ENCODE measurements at regions of chr1 and their contacts with region 1.

Region 1: DNA sequence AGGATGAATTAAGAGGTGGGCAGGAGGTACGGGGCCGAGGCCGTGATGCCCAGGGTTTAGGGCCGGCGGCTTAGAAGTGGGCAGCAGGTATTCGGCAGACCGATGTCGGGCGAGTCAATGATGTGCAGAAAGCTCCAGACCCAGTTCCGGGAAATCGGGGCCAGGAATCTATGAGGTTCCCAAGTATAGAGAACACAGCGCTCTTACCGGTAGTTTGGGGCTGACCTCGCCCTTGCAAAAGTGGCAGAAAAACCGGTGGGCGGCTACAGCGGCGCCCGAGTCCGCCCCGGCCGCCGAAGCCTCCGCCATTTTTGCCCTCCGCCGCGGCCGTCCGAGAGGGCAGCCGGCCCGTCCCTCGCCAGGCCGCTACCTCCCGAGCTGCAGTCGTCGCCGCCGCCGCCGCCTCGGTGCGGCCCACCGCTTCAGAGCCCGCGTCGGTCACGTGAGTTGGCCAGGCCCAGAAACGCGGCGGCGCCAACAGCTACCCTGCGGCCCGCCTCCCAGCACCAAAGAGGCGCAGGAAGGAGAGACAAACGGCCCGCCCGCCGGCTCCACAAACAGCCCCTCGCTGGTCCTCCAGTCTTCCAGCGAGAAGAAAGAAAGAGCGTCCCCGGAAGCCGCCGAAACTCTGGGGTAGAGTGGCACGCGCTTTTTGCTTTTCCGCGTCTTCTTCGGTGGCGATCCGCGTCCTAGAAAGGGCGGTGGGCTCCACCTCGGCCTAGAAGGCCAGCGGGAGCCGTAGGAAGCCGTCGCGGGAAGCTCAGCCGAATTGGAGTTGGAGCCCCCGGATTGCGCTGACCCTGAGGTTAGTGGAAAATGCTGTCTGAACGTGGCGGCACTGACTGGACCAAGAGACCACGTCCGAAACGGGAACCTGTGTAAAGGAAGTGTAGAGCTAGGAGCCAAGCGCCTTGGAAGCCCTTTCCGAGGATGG is at the starts of genes POLR3C and RNF115:
- DNase-seq: peak; percentile 97
- ATAC-seq: peak; percentile 97
- total RNA-seq, gene POLR3C: 11.4 TPM
- total RNA-seq, gene RNF115: 47.9 TPM

Region 2: DNA sequence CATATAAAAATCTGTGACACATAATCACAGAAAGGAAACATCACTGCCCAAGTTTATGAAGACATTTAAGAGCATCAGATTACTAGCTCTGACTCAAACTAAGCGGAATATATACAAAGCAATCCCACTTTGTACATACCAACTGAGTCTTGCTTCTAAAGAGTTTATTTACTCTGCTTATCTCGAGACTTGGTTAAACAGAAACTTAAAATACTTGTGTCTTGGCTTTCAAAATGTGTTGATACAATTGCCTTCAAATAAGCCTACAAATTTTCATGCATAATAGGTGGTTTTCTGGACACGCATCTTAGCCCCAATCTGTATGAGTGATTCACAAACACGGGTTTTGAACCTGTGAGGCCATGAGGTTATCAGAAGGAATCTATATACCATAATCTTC is 83.6 kb before region 1 on chr1:
- intact Hi-C with region 1: loop called (anchors 10 kb)
- DNase-seq: no peak
- ATAC-seq: no peak

Region 3: DNA sequence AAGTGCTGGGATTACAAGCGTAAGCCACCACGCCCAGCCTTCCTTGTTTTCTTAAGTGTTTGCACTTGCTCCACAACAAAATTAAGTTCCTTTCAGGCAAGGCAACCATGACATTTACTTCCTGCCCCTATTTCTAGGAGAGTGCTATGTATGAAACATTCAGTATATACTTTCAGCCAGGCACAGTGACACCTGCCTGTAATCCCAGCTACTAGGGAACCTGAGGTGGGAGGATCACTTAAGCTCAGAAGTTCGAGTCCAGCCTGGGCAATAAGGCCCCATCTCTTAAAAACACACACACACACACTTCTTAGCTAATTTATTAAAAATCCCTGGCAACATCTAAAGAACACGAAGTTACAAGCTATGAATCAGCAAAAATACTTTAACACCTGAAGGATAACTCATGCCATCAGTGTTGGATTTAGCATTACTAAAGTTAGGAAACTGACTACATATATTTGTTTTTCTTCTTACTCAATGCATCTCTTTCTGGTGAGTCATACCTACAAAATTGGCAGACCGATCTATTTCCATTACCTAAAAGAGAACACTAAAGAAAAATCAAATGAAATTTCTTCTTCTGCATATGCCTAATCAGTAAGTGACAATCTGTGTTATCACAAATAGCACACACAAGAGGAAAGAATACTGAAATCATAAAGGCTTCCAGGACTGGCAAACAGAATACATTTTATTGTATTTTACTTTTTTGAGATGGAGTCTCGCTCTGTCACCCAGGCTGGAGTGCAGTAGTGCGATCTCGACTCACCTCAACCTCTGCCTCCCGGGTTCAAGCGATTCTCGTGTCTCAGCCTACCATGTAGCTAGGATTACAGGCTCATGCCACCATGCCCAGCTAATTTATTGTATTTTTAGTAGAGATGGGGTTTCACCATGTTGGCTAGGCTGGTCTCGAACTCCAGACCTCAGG is 41.4 kb before region 1 on chr1:
- intact Hi-C with region 1: loop called (anchors 5 kb)
- DNase-seq: no peak
- ATAC-seq: no peak

Region 4: DNA sequence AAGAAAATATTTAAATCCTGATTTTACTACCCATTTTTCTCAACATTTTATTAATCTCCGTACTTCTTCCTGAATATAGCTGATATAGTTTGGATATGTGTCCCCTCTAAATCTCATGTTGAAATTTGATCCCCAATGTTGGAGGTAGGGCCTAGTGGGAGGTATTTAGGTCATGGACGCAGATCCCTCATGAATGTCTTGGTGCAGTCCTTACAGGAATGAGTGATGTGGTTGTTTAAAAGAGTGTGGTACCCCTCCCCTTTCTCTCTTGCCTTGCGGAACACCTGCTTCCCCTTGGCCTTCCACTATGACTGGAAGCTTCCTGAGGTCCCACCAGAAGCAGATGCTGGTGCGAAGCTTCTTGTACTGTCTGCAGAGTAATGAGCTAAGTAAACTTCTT is 17.4 kb before region 1 on chr1:
- intact Hi-C with region 1: no loop called
- DNase-seq: no peak
- ATAC-seq: no peak

Region 5: DNA sequence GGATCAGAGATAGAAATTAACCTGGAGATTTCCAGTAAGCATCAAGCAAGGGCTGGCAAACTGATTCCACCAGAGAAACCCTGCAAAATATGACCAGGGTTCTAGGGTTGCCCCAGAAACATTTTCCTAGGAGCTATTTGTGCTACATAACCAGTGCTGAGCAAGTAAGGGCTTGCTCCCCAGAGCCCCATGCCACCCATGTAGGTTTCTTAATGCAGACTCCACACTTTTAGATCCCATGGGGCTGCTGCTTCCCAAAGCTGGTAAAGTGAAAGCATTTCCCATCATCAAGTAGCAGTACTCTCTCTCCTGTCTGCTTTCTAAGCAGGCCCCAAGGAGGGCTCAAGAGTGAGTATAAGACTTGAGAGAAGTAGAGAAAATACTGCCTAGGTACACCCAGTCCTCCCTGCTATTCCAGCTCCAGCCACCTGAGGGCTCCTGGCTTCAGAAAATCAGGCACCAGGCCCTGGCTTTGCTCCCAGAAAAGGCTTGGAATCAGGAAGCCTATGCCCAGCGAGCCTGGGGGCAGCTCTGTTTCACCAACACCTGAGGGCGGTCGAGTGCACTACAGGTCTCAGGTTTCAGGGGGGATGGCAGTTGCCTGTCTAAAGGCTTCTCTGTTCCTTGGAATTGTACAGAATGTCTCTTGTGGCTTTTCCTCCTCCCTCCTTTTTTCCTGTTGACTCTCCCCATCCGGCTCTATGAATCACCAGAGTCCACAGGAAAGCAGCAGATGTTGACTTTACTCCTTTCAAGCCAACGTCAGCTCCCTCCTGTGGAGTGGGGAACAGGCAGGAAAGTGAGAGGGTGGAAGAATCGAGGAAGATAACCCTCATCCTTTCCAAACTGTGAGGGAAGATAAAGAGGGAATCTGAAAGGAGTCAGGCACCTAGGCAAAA is 68.0 kb after region 1 on chr1:
- intact Hi-C with region 1: no loop called
- DNase-seq: peak; percentile 88
- ATAC-seq: peak; percentile 91

Region 6: DNA sequence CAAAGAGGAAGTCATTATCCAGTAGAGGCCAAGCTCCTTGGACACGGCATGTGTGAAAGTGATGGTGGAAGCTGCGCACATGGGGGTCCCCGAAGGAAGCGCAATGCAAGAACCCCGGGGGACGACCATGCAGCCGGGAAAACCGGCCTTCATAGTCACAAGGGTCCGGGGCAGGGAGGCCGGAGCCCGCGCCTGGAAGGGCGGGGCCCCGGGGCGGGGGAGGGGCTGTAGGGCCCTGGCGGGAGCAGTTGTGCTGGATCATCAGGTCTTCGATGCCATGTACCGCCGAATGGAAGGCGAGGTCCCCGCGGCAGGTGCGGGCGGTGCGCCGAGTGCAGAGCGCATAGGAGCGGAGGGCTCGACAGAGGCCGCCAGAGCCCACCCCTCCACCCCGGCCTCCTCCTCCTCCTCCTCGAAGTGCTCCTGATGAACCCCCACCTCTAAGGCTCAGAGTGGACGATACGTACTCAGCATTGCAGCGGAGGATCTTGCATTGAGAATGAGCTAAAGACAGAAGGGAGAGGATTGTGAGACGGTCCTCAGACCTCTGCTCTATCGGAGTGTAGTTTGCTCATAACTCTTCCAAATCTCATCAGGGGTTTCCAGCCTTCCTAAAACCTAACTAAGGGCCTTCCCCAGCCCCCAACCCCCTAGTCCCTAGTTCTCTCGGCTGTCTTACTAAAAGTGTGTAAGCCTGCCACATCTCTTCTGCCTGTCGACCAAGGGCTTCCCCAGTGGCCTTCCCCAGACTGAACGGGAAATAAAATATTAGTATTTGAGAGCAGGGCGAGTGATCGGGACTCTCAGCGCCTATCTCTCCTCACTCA is 195.6 kb after region 1 on chr1:
- intact Hi-C with region 1: no loop called
- DNase-seq: no peak
- ATAC-seq: no peak

Measured in Right ventricle myocardium inferior (tissue), 1 donor.